ENCODE measurements at regions of chr12 and their contacts with region 1.

Region 1: GRCh38 chr12:106223485-106224354 is 24.1 kb downstream of the CKAP4 start:
- DNase-seq: peak; percentile 81
- H3K4me3 ChIP-seq: peak overlapping the region in 1 of 2 experiments; percentile 21; a peak in 1 of 4 replicates
- H3K27ac ChIP-seq: no peak overlapping the region
- H3K4me1 ChIP-seq: no peaks in the 10 kb centered on the region
- H3K27me3 ChIP-seq: no peaks in the 10 kb centered on the region
- CTCF ChIP-seq: peak; percentile 87
- EP300 ChIP-seq: no peak
- RAD21 ChIP-seq: peak; percentile 75

Region 2: GRCh38 chr12:104858611-104859543 is 1364.8 kb before region 1 on chr12:
- CTCF ChIA-PET with region 1: no interaction called
- POLR2A ChIA-PET with region 1: no interaction called
- DNase-seq: no peak
- H3K4me3 ChIP-seq: no peak overlapping the region
- H3K27ac ChIP-seq: peak overlapping the region in 1 of 2 experiments; percentile 85; a peak in 2 of 4 replicates
- H3K4me1 ChIP-seq: peaks cover 0 to 18% of the 10 kb centered on the region in 2 experiments; a peak in 1 of 4 replicates
- H3K27me3 ChIP-seq: no peaks in the 10 kb centered on the region
- CTCF ChIP-seq: no peak
- EP300 ChIP-seq: peak in 1 of 2 experiments; percentile 66; a peak in 1 of 4 replicates
- RAD21 ChIP-seq: no peak

Region 3: DNA sequence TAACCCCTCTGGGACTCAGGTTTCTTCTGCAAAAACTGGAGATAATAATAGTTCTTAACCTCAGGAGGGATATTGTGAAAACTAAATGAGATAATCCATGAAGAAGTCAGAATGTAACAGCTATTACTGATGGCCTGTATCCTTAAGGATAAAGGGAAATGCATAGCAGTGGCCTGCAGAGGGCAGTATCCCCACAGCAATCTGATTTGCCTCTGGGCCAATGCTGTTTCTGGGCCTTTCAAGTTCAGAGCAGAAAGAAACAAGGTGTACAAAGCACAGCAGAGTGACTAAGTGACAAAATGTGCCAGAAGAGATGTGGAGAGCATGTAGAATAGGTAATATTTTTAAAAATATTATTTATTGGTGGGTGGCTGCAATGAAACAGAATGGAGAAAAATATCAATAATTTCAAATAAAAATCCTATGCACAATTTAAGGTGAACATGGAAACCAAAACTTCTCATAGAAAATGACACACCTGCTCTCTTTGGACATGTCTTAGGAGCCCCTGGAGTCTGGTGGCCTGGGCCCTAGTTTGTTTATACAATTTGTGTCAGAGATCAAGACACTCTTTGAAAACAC is 803.0 kb before region 1 on chr12:
- CTCF ChIA-PET with region 1: interaction called, 11 read pairs
- POLR2A ChIA-PET with region 1: no interaction called
- DNase-seq: peak; percentile 65
- H3K4me3 ChIP-seq: no peak overlapping the region; a peak in 1 of 4 replicates
- H3K27ac ChIP-seq: no peak overlapping the region
- H3K4me1 ChIP-seq: peaks cover 0 to 7% of the 10 kb centered on the region in 2 experiments; a peak in 2 of 4 replicates
- H3K27me3 ChIP-seq: no peaks in the 10 kb centered on the region
- CTCF ChIP-seq: peak; percentile 97
- EP300 ChIP-seq: no peak
- RAD21 ChIP-seq: peak; percentile 99

Region 4: DNA sequence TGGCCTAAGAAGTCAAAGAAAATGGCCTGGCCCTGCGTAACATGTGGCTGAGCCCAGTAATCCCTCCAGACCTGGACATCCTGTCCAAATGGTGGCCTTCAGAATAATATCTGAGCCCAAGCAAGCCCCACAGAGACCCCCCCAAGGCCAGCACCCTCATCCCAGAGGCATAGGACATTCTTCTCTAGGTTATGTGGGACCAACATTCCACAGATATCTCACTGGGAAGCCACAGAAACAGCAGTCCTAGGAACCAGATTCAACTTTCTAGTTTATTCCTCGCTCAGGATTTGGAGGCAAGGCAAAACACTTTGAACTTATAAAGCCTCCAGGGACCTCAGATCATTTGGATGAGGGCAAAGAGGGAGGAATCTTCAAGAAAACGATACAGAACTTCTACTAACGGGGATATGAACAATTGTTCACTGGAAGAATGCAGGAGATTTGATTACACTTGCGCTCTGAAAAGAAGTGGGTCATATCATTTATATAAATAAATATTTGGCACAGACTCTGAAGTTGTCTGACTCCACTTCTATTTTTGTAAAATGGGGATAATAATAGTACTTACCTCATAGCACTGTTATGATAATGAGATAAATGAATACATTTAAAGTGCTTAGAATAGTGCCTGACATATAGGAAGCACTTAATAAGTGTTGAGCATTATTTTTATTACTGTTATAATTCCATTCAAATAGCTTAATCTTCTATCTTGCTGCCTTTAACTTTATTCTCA is 256.5 kb before region 1 on chr12:
- CTCF ChIA-PET with region 1: no interaction called
- POLR2A ChIA-PET with region 1: no interaction called
- DNase-seq: no peak
- H3K4me3 ChIP-seq: no peak overlapping the region
- H3K27ac ChIP-seq: peak overlapping the region in 1 of 2 experiments; percentile 19; a peak in 2 of 4 replicates
- H3K4me1 ChIP-seq: no peaks in the 10 kb centered on the region; a peak in 1 of 4 replicates
- H3K27me3 ChIP-seq: no peaks in the 10 kb centered on the region
- CTCF ChIP-seq: no peak
- EP300 ChIP-seq: no peak
- RAD21 ChIP-seq: no peak

Region 5: DNA sequence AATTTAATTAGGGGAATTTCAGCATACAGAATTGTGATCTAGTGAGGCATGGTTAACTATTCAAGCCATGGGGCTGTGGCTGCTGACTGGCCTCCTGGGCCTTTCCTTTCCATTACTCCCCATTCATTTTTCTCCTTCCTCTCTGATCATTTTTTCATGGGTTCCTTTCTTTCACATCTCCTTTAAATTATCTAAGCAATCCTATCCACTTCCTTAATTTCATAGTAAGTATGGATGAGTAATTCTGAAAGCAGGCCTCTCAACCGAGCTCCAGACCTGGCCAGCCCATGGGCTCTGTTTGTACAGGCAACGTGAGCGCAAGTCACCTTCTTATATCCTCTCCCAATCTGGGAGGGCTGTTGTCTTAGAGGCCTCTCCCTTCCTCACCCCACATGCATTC is 10.7 kb after region 1 on chr12:
- CTCF ChIA-PET with region 1: interaction called, 37 read pairs
- POLR2A ChIA-PET with region 1: no interaction called
- DNase-seq: no peak
- H3K4me3 ChIP-seq: no peak overlapping the region
- H3K27ac ChIP-seq: peak overlapping the region in 1 of 2 experiments; percentile 69; a peak in 2 of 4 replicates
- H3K4me1 ChIP-seq: peaks cover 7 to 12% of the 10 kb centered on the region in 2 experiments; a peak in 2 of 4 replicates
- H3K27me3 ChIP-seq: no peaks in the 10 kb centered on the region
- CTCF ChIP-seq: no peak
- EP300 ChIP-seq: 0 out of 4 replicates have a peak, but pooled peaks of 1 of the 2 experiments have one; percentile 16
- RAD21 ChIP-seq: no peak

Region 6: DNA sequence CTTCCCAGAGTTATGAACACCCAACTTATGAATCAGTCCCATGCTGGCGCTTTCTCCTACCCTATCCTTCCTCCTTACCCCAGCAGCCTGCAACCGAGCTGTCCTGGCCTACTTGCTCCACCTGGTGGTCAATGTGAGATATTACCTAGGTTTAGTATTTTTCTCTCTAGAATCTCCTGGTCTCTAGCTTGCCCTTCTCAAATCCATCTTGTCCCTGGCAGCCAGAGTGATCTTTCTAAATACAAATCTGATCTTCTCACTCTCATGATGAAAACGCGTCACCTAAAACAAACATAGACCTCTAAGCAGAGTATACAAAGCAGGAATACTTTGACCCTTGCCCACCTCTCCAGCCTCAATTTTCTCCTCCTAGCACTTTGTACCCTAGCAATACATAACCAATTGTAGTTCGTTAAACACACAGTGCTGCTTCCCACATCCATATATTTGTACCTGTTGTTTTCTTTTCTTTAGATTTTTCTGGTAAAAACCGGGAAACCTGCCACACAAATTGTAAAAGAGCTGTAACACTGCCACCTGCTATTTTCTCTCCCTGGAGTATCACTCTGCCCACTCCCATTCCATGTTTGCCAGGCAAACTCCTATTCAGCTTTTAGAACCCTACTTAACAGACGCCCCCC is 58.9 kb after region 1 on chr12:
- CTCF ChIA-PET with region 1: interaction called, 173 read pairs
- POLR2A ChIA-PET with region 1: no interaction called
- DNase-seq: peak; percentile 58
- H3K4me3 ChIP-seq: no peak overlapping the region; a peak in 1 of 4 replicates
- H3K27ac ChIP-seq: no peak overlapping the region
- H3K4me1 ChIP-seq: no peaks in the 10 kb centered on the region
- H3K27me3 ChIP-seq: no peaks in the 10 kb centered on the region
- CTCF ChIP-seq: peak; percentile 71
- EP300 ChIP-seq: no peak
- RAD21 ChIP-seq: peak; percentile 66

Region 7: DNA sequence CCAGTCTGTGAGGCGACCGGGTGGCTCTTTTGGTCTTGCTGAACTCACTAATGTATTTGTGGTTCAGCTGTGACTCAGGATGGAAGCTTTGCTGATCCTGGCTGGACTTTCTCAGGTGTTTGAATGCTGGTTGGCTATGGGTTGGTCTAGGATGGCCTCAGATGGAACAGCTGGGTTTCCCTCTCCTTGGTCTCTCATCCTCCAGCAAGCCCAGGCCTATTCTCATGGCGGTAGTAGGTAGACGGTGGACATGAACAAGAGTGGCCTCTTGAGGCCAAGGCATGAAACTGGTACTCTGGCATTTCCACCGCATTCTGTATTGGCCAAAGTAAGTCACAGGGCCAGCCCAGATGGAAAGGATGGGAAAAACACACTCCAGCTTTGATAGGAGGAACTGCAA is 122.0 kb after region 1 on chr12:
- CTCF ChIA-PET with region 1: interaction called, 15 read pairs
- POLR2A ChIA-PET with region 1: no interaction called
- DNase-seq: peak; percentile 25
- H3K4me3 ChIP-seq: no peak overlapping the region
- H3K27ac ChIP-seq: no peak overlapping the region
- H3K4me1 ChIP-seq: peaks cover 4 to 6% of the 10 kb centered on the region in 2 experiments; a peak in 3 of 4 replicates
- H3K27me3 ChIP-seq: no peaks in the 10 kb centered on the region
- CTCF ChIP-seq: peak; percentile 42
- EP300 ChIP-seq: no peak
- RAD21 ChIP-seq: peak; percentile 61

Region 8: DNA sequence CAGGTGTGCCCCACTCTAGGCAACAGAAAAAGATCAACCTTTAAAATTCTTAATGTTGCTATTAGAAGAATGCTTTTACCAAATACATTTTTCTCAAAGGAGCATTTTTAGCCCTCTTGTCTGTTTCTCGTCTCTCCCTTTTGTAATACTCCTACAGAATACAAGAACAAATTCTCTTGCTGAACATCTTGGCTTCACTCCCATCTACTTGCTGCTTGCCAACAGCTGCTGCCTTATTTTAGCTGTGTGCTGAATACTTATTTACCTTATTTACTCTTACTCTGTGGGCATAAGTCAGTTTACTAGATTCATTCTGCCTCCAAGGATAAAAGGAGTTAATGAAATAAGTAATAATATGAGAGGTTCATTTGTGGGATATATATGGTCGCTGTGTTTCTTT is 204.7 kb after region 1 on chr12:
- CTCF ChIA-PET with region 1: no interaction called
- POLR2A ChIA-PET with region 1: no interaction called
- DNase-seq: no peak
- H3K4me3 ChIP-seq: no peak overlapping the region
- H3K27ac ChIP-seq: peak overlapping the region in 1 of 2 experiments; percentile 62; a peak in 2 of 4 replicates
- H3K4me1 ChIP-seq: no peaks in the 10 kb centered on the region; a peak in 1 of 4 replicates
- H3K27me3 ChIP-seq: no peaks in the 10 kb centered on the region
- CTCF ChIP-seq: no peak
- EP300 ChIP-seq: no peak
- RAD21 ChIP-seq: no peak